ENCODE measurements at regions of chr1 and their contacts with region 1.

Region 1: DNA sequence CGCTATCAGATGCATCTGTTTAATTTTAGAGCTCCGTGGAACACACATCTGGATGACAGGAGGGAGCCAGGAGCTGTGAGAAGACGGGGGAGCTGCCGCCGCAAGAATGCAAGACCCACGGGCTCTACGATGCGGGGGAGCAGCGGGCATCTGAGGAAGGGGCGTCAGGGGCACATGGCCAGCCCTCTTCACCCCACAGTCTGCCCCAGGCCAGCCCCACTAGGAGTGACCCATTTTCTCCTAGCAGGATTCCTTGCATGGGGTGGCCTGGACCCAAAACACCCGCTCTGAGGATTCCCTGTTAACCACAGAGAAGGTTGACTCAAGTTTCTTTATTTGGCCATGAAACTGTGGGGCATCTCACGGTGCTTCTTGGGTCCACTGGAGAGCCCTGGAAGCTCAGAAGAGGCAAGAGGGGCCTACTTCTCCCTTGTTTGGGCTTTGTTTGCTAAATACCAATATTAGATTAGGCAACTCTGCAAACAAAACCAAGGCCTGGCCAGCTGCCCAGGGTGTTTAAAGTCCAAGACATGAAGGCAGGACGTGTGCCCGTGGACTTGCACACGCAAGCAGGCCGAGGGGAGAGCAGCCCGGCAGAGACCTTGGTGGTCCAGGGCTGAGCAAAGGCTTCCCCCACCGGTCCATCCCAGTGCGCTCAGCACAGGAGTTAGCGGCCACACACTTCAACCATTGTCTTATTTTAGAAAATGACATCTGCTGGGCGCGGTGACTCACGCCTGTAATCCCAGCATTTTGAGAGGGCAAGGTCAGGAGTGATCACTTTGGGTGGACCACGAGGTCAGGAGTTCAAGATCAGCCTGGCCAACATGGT is 89.8 kb downstream of the DHRS3 start:
- DNase-seq: peak; percentile 98
- ATAC-seq: peak; percentile 90
- H3K4me3 ChIP-seq: peak overlapping the region in 1 of 3 experiments; percentile 45; a peak in 2 of 6 replicates
- H3K27ac ChIP-seq: peak overlapping the region; percentile 76
- H3K4me1 ChIP-seq: peaks cover 95% of the 10 kb centered on the region
- H3K27me3 ChIP-seq: no peaks in the 10 kb centered on the region
- CTCF ChIP-seq: peak; percentile 47
- EP300 ChIP-seq: peak; percentile 96 to 98
- POLR2A ChIP-seq: peak in 1 of 2 experiments; percentile 41; a peak in 2 of 4 replicates
- RAD21 ChIP-seq: peak; percentile 40; the same call in 1 of the 2 replicates

Region 2: GRCh38 chr1:11893907-11894251 is 634.4 kb before region 1 on chr1:
- CTCF ChIA-PET with region 1: no interaction called
- POLR2A ChIA-PET with region 1: no interaction called
- in situ Hi-C with region 1: no loop called
- intact Hi-C with region 1: no loop called
- DNase-seq: peak; percentile 49
- ATAC-seq: peak; percentile 86
- H3K4me3 ChIP-seq: no peak overlapping the region
- H3K27ac ChIP-seq: no peak overlapping the region
- H3K4me1 ChIP-seq: peaks cover 48% of the 10 kb centered on the region
- H3K27me3 ChIP-seq: peaks cover 0 to 4% of the 10 kb centered on the region in 2 experiments; a peak in 2 of 5 replicates
- CTCF ChIP-seq: peak; percentile 96
- EP300 ChIP-seq: no peak
- POLR2A ChIP-seq: peak in 1 of 2 experiments; percentile 27; a peak in 1 of 4 replicates
- RAD21 ChIP-seq: peak; percentile 92

Region 3: DNA sequence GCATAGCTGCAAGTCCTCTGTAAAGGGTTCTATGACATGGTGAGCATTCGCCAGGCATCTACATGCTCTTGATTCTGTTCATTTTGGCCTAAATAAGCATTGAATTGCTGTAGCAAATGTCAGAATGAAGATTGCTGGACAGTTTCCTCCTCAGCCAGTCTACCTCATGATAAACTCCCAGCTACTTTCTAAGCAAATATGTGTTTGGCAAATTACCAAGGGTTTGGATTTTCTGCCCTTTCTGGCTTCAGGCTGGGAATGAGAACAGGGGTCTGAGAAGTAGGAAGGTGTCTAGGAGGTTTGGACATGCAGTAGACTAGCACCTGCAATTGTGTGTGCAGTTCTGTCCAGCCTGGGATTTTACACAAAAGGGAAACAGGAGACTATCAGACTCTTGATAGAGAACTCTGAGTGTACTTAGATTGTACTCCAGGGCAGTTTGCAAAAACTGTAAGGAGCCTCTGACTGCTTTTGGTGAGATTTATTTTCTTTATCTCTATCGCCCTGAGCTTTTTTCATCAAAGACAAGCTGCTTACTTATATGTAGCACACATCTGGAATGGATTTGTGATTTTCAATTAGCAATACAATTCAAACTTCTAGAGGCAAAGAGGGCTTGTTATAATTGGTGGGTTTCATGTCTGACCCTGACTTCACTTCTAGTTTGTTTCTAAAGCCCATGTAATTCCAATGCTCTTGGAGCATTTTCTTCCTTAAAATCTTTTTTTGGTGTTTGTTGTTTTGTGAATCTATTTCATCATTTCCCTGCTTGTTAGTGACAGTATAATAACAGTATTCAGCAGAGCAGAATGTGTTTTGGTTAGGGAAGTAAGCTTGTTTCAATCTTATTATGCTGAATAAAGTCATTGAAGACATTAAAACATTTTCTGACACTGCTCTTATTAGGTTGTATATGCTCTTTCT is 147.6 kb before region 1 on chr1:
- CTCF ChIA-PET with region 1: no interaction called
- POLR2A ChIA-PET with region 1: interaction called, 39 read pairs
- in situ Hi-C with region 1: no loop called
- intact Hi-C with region 1: no loop called
- DNase-seq: peak; percentile 54
- ATAC-seq: peak; percentile 25
- H3K4me3 ChIP-seq: peak overlapping the region in 1 of 3 experiments; percentile 57; a peak in 1 of 6 replicates
- H3K27ac ChIP-seq: peak overlapping the region; percentile 99
- H3K4me1 ChIP-seq: peaks cover 67% of the 10 kb centered on the region
- H3K27me3 ChIP-seq: no peaks in the 10 kb centered on the region
- CTCF ChIP-seq: no peak
- EP300 ChIP-seq: peak in 1 of 2 experiments; percentile 19; a peak in 1 of 4 replicates
- POLR2A ChIP-seq: 0 out of 4 replicates have a peak, but pooled peaks of 1 of the 2 experiments have one; percentile 31
- RAD21 ChIP-seq: no peak

Region 4: GRCh38 chr1:12407050-12407961 is 120.9 kb before region 1 on chr1:
- CTCF ChIA-PET with region 1: no interaction called
- POLR2A ChIA-PET with region 1: interaction called, 33 read pairs
- in situ Hi-C with region 1: loop called (anchors 10 kb)
- intact Hi-C with region 1: loop called (anchors 2 kb)
- DNase-seq: peak; percentile 56
- ATAC-seq: peak; percentile 34; the same call in 1 of the 3 replicates
- H3K4me3 ChIP-seq: peak overlapping the region in 1 of 3 experiments; percentile 13; a peak in 2 of 6 replicates
- H3K27ac ChIP-seq: peak overlapping the region; percentile 76
- H3K4me1 ChIP-seq: peaks cover 82% of the 10 kb centered on the region
- H3K27me3 ChIP-seq: no peaks in the 10 kb centered on the region
- CTCF ChIP-seq: peak; percentile 66
- EP300 ChIP-seq: no peak
- POLR2A ChIP-seq: no peak
- RAD21 ChIP-seq: no peak

Region 5: DNA sequence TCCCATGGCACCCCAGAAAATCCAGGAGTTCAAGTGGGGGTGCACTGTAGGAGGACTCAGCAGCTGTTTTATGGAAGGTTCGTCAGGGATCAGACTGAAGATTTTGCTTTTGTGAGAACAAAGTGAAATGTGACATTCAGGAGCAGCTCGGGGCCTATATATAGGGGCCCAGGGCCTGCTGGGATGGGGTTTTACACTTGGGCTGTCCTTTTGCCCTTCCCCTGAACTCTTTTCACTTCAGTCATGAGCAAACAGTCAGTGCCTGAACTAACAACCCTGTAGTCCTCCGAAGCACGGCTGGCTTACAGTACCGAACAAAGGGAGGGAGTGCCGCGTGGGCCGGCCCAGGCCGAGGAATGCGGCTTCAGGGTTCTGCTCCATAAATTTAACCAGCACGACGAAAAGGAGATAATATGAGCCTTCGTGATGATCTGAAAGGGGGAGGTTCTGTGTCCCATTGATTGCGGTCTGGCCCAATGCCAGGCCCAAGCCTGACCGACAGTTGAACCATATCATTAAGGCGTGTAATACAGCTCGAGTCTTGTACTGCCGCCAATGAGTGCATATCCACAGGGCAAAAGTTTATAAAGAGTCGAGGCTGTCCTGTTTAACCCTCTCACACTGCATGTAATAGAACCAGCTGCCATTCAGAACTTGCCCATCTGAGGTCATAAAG is 50.2 kb before region 1 on chr1:
- CTCF ChIA-PET with region 1: no interaction called
- POLR2A ChIA-PET with region 1: interaction called, 46 read pairs
- in situ Hi-C with region 1: loop called (anchors 5 kb)
- intact Hi-C with region 1: loop called (anchors 1 kb)
- DNase-seq: peak; percentile 99
- ATAC-seq: peak; percentile 98
- H3K4me3 ChIP-seq: peak overlapping the region in 1 of 3 experiments; percentile 24; a peak in 2 of 6 replicates
- H3K27ac ChIP-seq: peak overlapping the region; percentile 63
- H3K4me1 ChIP-seq: peaks cover 77% of the 10 kb centered on the region
- H3K27me3 ChIP-seq: no peaks in the 10 kb centered on the region
- CTCF ChIP-seq: no peak
- EP300 ChIP-seq: peak in 1 of 2 experiments; percentile 76; a peak in 2 of 4 replicates
- POLR2A ChIP-seq: peak; percentile 6 to 55; a peak in 3 of 4 replicates
- RAD21 ChIP-seq: peak; percentile 28; the same call in 1 of the 2 replicates

Region 6: GRCh38 chr1:12549460-12550349 is 21.5 kb after region 1 on chr1:
- CTCF ChIA-PET with region 1: no interaction called
- POLR2A ChIA-PET with region 1: interaction called, 14 read pairs
- in situ Hi-C with region 1: no loop called
- intact Hi-C with region 1: no loop called
- DNase-seq: peak; percentile 90
- ATAC-seq: peak; percentile 47
- H3K4me3 ChIP-seq: peak overlapping the region in 2 of 3 experiments; percentile 10 to 40; a peak in 1 of 6 replicates
- H3K27ac ChIP-seq: no peak overlapping the region
- H3K4me1 ChIP-seq: peaks cover 81% of the 10 kb centered on the region
- H3K27me3 ChIP-seq: peaks cover 2 to 14% of the 10 kb centered on the region in 2 experiments; a peak in 3 of 5 replicates
- CTCF ChIP-seq: no peak
- EP300 ChIP-seq: peak in 1 of 2 experiments; percentile 43; a peak in 3 of 4 replicates
- POLR2A ChIP-seq: no peak
- RAD21 ChIP-seq: no peak

Measured in HepG2 (cell line).